ENCODE measurements at regions of chr7 and their contacts with region 1.

Region 1: GRCh38 chr7:7909376-7909775 is 59.2 kb upstream of the GLCCI1 start:
- DNase-seq: no peak
- H3K27ac ChIP-seq: no peak overlapping the region
- CTCF ChIP-seq: no peak

Region 2: DNA sequence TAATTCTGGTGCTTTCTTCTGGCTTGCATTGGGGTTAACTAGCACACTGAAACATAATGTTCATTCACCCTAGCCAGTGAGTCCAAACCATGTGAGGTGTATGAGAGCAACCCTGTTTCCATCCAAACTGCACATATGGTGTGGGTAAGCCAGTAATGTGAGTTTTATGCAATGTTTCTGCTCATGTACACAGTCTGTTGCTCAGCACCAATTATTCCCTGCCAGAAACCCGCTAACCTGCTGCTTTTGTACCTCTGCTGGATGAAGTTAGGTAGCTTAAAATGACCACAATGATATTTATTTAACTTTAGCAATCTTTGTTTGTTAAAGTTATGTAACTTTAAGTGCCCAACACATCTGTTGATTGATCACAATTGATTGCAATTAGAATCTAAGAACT is 97.3 kb before region 1 on chr7:
- CTCF ChIA-PET with region 1: interaction called, 10 read pairs
- POLR2A ChIA-PET with region 1: no interaction called
- DNase-seq: no peak
- H3K27ac ChIP-seq: no peak overlapping the region
- CTCF ChIP-seq: no peak

Region 3: GRCh38 chr7:7857143-7857583 is 52.2 kb before region 1 on chr7:
- CTCF ChIA-PET with region 1: no interaction called
- POLR2A ChIA-PET with region 1: no interaction called
- DNase-seq: no peak
- H3K27ac ChIP-seq: no peak overlapping the region
- CTCF ChIP-seq: no peak